ENCODE measurements at regions of chr4 and their contacts with region 1.

Region 1: DNA sequence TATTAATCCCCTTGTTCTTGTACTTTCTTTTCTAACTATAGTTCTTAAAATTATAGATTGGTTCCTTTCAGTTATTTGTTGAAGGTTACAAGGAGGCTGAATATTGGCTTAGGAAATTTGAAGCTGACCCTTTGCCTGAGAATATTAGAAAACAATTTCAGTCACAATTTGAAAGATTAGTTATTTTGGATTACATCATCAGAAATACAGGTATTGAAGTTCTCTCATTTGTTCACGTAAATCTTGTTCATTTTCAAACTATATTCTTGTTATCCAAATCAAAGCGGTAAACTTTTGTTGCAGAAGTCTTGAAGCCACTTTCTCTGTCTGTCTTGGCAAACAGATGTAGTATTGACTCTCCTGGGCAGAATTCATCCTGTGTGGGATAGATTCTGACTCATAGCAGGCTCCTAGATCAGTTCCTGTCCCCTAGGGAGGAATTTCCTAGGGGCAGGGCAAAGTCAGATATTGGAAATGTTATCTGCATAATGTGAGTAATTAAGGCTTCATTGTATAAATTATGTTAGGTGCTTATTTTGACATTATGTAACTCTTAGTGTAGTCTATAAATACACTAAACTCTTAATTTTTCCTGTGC is 25.2 kb downstream of the PI4K2B start:
- DNase-seq: peak; percentile 18
- H3K4me3 ChIP-seq: no peak overlapping the region
- CTCF ChIP-seq: no peak

Region 2: DNA sequence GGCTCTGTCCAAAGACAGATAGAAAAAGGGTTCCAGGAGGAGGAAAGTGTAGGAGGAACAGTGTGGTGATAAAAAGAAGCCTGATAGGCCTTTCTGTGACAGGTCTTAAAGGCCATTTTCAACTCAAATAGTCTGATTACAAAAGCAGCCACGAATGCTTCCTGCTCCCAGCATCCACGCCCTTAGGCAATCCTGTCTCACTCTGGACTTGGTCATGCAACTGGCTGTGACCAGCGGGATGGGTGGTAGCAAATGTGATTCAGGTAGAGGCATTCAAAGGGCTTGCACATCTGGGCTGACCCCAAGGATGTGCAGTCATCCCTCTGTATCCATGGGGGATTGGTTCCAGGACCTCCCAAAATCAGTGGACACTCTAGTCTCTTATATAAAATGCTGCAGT is 84.4 kb before region 1 on chr4:
- in situ Hi-C with region 1: loop called (anchors 5 kb)
- DNase-seq: no peak
- H3K4me3 ChIP-seq: no peak overlapping the region
- CTCF ChIP-seq: no peak

Region 3: DNA sequence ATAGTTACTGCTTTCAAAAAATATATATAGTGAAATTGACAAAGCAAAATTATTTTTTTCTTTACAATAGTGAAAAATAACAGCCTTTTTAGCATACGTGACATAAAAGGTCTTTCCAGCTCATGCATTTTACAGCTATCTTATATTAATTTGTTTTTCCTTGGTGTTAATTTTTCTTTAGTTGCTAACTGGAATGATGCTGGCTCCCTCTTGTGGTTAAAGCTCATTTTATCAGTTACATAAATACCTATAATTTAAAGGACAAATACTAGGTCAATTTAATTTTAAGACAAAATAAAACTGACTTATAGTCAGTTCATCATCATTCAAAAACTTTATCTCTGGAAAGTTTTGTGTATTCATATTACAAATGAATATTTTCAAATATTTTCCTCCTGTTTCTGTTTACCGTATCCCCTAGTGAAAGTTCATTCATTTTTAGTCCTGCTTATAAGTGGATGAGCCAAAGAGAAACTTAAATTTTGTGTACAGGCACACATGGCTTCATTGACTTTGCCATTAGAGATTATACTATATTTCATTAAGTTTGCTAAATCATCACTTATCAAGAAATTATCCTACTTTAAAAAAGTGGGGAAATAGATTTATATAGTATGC is 108.0 kb after region 1 on chr4:
- in situ Hi-C with region 1: no loop called
- DNase-seq: peak; percentile 35
- H3K4me3 ChIP-seq: no peak overlapping the region
- CTCF ChIP-seq: peak; percentile 28

Measured in astrocyte of the cerebellum (primary cell).